ENCODE measurements at regions of chr19 and their contacts with region 1.

Region 1: GRCh38 chr19:35013031-35013819 is 13.1 kb downstream of the GRAMD1A start:
- DNase-seq: peak; percentile 77 to 87 (median 79)
- H3K4me3 ChIP-seq: peak overlapping the region in 1 of 2 donors; percentile 51
- H3K4me3 Mint-ChIP-seq: peak overlapping the region; percentile 66 to 91 (median 85)
- H3K27ac ChIP-seq: peak overlapping the region; percentile 64
- H3K27ac Mint-ChIP-seq: peak overlapping the region; percentile 89 to 98 (median 96)
- H3K4me1 ChIP-seq: peaks cover 76% of the 10 kb centered on the region
- H3K4me1 Mint-ChIP-seq: peaks cover 47 to 73% (median 58%) of the 10 kb centered on the region in 4 donors
- H3K27me3 ChIP-seq: no peaks in the 10 kb centered on the region
- H3K27me3 Mint-ChIP-seq: no peaks in the 10 kb centered on the region

Region 2: DNA sequence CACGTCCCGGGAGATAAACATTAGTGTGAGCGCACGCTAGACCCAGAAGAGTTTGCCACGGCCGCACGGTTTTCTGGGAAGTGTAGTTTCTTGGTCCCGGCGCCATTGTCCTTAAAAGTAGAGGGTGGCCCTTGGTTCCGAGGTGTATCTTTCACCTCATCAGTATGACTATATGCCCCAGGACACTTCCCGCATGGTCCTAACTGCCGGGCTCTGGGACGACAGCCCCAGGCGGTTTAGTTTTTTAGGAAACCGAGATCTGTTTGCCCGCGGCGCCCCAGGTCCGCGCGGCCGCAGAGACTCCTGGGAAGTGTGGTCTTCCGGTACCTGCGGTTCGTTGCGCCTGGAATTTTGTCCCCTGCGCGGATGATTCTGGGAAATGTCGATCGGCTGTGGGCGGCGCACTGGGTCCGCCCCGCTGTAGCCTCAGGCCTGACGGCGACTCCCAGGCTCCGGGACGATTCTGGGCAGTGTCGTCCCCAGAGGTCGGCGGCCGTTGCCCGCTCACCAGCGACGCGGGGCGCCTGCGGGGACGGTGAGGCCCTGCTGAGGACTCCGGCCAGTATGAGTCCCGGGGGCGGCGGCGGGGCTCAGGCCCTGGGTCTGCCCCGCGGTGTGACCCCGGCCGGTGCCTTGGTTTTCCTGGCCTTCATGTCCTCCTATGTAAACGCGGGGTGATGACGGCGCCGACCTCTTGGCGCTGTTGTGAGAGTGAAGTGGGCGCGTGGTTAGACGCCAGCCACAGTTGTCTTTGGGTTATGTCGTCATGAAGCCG is 279.2 kb before region 1 on chr19 and contains the start of gene ZNF181:
- CTCF ChIA-PET with region 1: no interaction called
- POLR2A ChIA-PET with region 1: no interaction called
- intact Hi-C with region 1: loop called (anchors 5 kb)
- DNase-seq: peak; percentile 78 to 88 (median 82)
- H3K4me3 ChIP-seq: peak within 1 kb of the TSS; percentile 79 to 93
- H3K4me3 Mint-ChIP-seq: peak within 1 kb of the TSS; percentile 94 to 98 (median 96)
- H3K27ac ChIP-seq: peak within 1 kb of the TSS; percentile 87
- H3K27ac Mint-ChIP-seq: peak within 1 kb of the TSS; percentile 94 to 99 (median 97)
- H3K4me1 ChIP-seq: peaks cover 26% of the 10 kb centered on the region
- H3K4me1 Mint-ChIP-seq: peaks cover 15 to 36% (median 26%) of the 10 kb centered on the region in 4 donors
- H3K27me3 ChIP-seq: no peaks in the 10 kb centered on the region
- H3K27me3 Mint-ChIP-seq: peaks cover 0 to 3% of the 10 kb centered on the region in 2 donors
- total RNA-seq, gene ZNF181: 23.6 to 24.0 TPM

Region 3: DNA sequence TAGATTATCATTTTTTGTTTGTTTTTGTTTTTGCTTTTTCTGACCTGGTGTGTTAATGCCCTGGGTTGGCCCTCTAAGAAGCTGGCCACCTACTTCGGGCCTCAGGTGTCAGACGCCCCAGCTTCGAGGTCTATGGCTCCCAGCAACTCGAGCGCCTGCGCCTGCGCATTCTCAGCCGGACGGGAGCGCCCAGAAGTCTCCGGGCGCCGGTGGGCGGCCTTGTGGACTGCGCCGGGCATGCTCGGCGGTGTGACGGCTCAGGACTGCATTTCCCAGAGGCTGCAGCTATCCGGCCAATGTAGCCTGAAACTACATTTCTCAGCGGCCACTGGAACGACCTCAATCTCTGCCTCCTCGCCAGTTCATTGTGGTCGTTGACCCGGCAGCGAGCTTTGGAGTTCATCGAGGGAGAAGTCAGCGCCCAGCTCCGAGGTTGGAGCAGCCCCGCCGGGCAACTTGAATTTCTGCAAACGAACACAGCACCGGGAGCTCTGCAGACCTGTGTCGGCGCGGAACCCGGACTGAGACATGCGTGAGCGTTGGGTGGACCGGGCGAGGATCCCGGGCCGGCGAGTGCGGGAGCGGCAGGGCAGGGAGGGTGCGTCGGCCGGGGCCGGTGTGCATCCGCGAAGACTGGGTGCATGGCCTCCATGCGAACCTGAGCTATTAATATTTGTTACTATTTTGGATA is 86.4 kb before region 1 on chr19 and contains the start of gene ZNF30:
- CTCF ChIA-PET with region 1: interaction called, 11 read pairs
- POLR2A ChIA-PET with region 1: interaction called, 15 read pairs
- intact Hi-C with region 1: no loop called
- DNase-seq: peak; percentile 62 to 76 (median 69)
- H3K4me3 ChIP-seq: peak within 1 kb of the TSS; percentile 25 to 67
- H3K4me3 Mint-ChIP-seq: peak within 1 kb of the TSS; percentile 89 to 94 (median 92)
- H3K27ac ChIP-seq: peak within 1 kb of the TSS; percentile 31
- H3K27ac Mint-ChIP-seq: peak within 1 kb of the TSS in 6 of 7 donors; percentile 61 to 84 (median 78)
- H3K4me1 ChIP-seq: peaks cover 20% of the 10 kb centered on the region
- H3K4me1 Mint-ChIP-seq: peaks cover 13 to 24% (median 19%) of the 10 kb centered on the region in 4 donors
- H3K27me3 ChIP-seq: no peaks in the 10 kb centered on the region
- H3K27me3 Mint-ChIP-seq: no peaks in the 10 kb centered on the region
- total RNA-seq, gene ZNF30: 9.2 to 9.7 TPM

Region 4: DNA sequence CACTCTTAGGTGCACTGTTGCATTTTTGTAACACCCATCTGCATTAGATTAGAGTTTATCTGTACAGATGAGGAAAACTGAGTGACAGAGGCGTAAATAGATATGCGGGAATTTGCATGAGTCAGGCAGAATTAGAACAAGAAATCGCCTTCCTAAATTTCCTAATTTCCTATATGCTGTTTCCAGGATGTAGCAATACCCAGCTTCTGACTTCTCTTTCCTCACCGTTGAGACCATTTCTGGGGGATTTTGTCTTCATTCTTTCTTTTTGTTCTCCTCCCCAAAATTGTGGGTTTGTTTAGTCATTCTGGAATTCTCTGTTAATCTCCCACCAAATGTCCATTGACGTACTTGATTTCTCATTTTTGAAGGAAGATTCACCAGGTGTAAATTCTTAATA is 38.6 kb before region 1 on chr19:
- CTCF ChIA-PET with region 1: interaction called, 124 read pairs
- POLR2A ChIA-PET with region 1: interaction called, 75 read pairs
- intact Hi-C with region 1: loop called (anchors 1 kb)
- DNase-seq: no peak
- H3K4me3 ChIP-seq: no peak overlapping the region
- H3K4me3 Mint-ChIP-seq: peak overlapping the region in 1 of 8 donors; percentile 26
- H3K27ac ChIP-seq: no peak overlapping the region
- H3K27ac Mint-ChIP-seq: peak overlapping the region in 1 of 7 donors; percentile 50
- H3K4me1 ChIP-seq: peaks cover 11% of the 10 kb centered on the region
- H3K4me1 Mint-ChIP-seq: peaks cover 9 to 19% (median 13%) of the 10 kb centered on the region in 4 donors
- H3K27me3 ChIP-seq: no peaks in the 10 kb centered on the region
- H3K27me3 Mint-ChIP-seq: peaks cover 0 to 4% of the 10 kb centered on the region in 2 donors

Region 5: GRCh38 chr19:34999498-35000341 is 13.5 kb before region 1 on chr19 and contains the start of gene GRAMD1A:
- CTCF ChIA-PET with region 1: interaction called, 71 read pairs
- POLR2A ChIA-PET with region 1: interaction called, 282 read pairs
- intact Hi-C with region 1: loop called (anchors 1 kb)
- DNase-seq: peak; percentile 52 to 69 (median 59)
- H3K4me3 ChIP-seq: peak within 1 kb of the TSS; percentile 50 to 83
- H3K4me3 Mint-ChIP-seq: peak within 1 kb of the TSS; percentile 94 to 99 (median 99)
- H3K27ac ChIP-seq: peak within 1 kb of the TSS; percentile 88
- H3K27ac Mint-ChIP-seq: peak within 1 kb of the TSS; percentile 88 to 99 (median 98)
- H3K4me1 ChIP-seq: peaks cover 79% of the 10 kb centered on the region
- H3K4me1 Mint-ChIP-seq: peaks cover 48 to 86% (median 67%) of the 10 kb centered on the region in 4 donors
- H3K27me3 ChIP-seq: no peaks in the 10 kb centered on the region
- H3K27me3 Mint-ChIP-seq: no peaks in the 10 kb centered on the region
- total RNA-seq, gene GRAMD1A: 205 to 221 TPM

Region 6: GRCh38 chr19:35044317-35045117 is 31.3 kb after region 1 on chr19:
- CTCF ChIA-PET with region 1: interaction called, 25 read pairs
- POLR2A ChIA-PET with region 1: interaction called, 15 read pairs
- intact Hi-C with region 1: no loop called
- DNase-seq: peak in 4 of 5 donors; percentile 45 to 62 (median 50)
- H3K4me3 ChIP-seq: no peak overlapping the region
- H3K4me3 Mint-ChIP-seq: peak overlapping the region in 1 of 8 donors; percentile 81
- H3K27ac ChIP-seq: no peak overlapping the region
- H3K27ac Mint-ChIP-seq: peak overlapping the region in 4 of 7 donors; percentile 51 to 71 (median 64)
- H3K4me1 ChIP-seq: peaks cover 32% of the 10 kb centered on the region
- H3K4me1 Mint-ChIP-seq: peaks cover 20 to 34% (median 26%) of the 10 kb centered on the region in 4 donors
- H3K27me3 ChIP-seq: no peaks in the 10 kb centered on the region
- H3K27me3 Mint-ChIP-seq: peaks cover 6 to 8% of the 10 kb centered on the region in 2 donors

Region 7: DNA sequence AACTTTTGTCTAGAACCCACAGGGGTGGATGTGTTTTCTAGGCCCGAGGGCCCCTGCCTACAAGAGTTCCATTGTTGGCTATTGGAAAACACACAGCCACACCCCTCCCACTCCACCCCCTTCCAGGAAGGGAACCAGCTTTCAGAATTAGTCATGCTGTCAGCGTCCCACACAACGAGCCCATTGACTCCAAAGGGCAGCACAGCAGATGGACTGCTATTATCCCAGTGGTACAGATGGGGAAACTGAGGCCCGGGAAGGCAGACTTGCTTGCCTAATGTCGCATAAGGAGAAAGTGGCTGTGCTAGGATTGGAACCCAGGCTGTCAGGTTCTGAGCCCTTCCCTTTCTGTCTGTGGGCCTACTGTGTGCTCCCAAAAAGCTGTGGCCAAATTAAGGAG is 94.3 kb after region 1 on chr19:
- CTCF ChIA-PET with region 1: no interaction called
- POLR2A ChIA-PET with region 1: no interaction called
- intact Hi-C with region 1: no loop called
- DNase-seq: no peak
- H3K4me3 ChIP-seq: no peak overlapping the region
- H3K4me3 Mint-ChIP-seq: no peak overlapping the region
- H3K27ac ChIP-seq: no peak overlapping the region
- H3K27ac Mint-ChIP-seq: no peak overlapping the region
- H3K4me1 ChIP-seq: no peaks in the 10 kb centered on the region
- H3K4me1 Mint-ChIP-seq: no peaks in the 10 kb centered on the region
- H3K27me3 ChIP-seq: no peaks in the 10 kb centered on the region
- H3K27me3 Mint-ChIP-seq: peaks cover 4 to 7% of the 10 kb centered on the region in 2 donors